Caco-2 (cell line): ENCODE measurements at regions of chr12 and their contacts with region 1.

Region 1: DNA sequence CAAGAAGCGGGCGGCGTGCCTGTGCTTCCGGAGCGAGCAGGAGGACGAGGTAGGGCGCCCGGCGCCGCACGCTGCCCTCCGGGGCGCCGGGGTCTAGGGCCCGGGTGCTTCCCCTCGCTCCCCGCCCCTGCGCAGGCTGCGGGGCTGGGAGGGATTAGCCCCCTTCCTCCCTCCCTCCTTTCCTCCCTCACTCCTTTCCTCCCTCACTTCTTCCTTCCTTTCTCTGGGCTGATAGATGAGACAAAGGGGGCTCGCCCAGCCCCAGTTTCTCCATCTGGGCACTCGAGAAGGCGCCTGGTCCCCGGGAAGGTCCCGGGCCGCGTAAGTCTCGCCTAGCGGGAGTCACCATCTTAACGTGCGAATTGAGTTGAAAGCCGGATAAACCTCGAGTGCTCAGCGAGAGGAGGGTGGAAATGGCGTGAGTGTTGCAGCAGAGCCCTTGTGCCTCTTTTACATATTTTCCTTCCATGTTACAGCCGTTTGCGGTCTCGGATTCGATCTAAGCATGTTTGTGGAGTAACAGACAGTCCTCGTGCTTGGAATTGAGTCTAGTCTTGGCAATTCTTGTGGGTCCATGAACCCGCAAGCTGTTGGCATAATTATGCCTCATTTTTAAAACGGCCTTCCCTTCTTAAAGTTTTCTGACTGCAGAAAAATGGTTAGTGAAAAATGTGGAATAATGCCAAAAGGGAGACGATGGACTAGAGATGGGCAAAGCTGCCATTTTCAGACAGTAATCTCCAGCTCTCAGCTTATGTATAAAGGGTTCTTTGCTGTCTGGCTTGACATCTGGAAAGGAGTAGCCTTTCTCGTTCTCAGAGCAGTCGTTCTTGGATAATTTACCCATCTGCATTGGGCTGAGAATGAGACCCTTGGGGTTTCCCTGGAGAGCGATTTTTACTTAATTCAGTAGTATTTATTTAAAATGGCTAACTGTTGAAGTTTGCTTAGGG is 924 bp downstream of the NUDT4 start:
- DNase-seq: peak in 1 of 2 experiments; percentile 26
- H3K4me3 ChIP-seq: peak overlapping the region; percentile 83
- H3K4me3 Mint-ChIP-seq: peak overlapping the region; percentile 80
- H3K27ac Mint-ChIP-seq: peak overlapping the region; percentile 90
- H3K4me1 ChIP-seq: peaks cover 36% of the 10 kb centered on the region
- H3K4me1 Mint-ChIP-seq: peaks cover 25% of the 10 kb centered on the region
- H3K27me3 ChIP-seq: no peaks in the 10 kb centered on the region
- H3K27me3 Mint-ChIP-seq: no peaks in the 10 kb centered on the region
- CTCF ChIP-seq: no peak

Region 2: DNA sequence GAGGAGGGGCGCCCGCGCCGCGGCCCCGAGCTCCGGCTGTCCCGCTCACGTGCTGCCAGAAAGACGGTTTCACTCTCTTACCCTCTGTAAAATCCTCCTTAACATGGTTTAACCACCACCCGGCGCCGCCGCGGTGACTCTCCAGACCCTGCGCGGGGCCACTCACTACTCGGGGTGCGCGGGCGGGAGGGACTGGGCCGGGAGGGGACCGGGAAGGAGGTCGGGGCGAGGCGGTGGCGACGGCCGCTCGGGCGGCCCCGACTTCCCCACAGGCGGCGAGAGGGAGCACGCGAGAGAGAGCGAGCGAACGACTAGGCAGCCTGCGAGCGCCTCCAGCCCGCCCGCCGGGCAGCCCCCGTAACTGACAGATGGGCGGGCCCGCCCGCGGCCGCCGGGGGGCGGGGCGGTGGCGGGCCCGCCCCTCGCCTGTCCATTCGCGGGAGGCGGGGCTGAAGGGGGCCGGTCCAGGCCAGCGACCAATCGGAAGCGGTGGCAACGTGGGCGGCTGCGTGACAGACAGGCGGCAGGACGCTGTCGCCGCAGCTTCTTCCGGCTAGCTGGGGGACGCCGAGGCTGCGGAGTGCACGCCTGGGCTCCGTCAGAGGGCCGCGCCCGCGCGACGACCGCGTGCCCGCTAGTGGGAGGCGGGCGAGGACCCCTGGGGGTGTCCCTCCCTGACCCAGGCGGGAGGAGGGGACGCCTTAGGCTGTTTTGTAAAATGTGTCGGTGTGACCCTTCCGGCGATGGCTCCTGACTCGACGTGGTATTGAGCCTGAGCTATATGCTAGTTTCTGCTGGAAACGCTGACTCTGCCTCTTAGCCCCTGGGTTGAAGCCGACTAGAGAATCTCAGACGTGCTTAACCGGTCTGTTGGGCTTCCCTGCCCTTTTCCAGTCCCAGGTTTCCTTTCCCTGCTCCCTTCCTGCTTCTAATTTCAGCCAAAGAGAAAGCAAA is 449.4 kb before region 1 on chr12 and contains the start of gene EEA1:
- CTCF ChIA-PET with region 1: no interaction called
- POLR2A ChIA-PET with region 1: no interaction called
- intact Hi-C with region 1: loop called (anchors 5 kb)
- DNase-seq: peak; percentile 97 to 98
- H3K4me3 ChIP-seq: peak within 1 kb of the TSS; percentile 88
- H3K4me3 Mint-ChIP-seq: peak within 1 kb of the TSS; percentile 90
- H3K27ac Mint-ChIP-seq: peak within 1 kb of the TSS; percentile 93
- H3K4me1 ChIP-seq: peaks cover 54% of the 10 kb centered on the region
- H3K4me1 Mint-ChIP-seq: peaks cover 50% of the 10 kb centered on the region
- H3K27me3 ChIP-seq: no peaks in the 10 kb centered on the region
- H3K27me3 Mint-ChIP-seq: no peaks in the 10 kb centered on the region
- CTCF ChIP-seq: peak in 1 of 2 experiments; percentile 12
- total RNA-seq, gene EEA1: 68.9 TPM in 2 replicates

Region 3: DNA sequence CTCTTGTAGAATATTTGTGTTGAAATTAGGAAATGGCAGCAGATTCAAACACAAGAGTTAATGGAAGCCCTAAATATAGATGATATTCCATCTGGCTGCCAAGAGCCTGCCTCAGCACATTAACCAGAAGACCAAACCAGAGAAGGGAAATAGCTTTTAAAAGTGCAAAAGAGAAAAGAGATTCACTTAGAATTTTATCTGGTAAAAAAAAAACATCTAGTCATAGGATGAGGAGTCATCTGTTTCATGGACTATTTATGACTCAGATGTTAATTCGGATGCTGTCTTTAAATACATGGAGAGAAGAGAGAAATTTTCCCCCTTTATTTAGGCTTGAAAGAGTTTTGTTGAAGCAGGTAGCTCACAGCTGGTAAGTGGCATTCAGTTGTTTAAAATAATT is 202.5 kb before region 1 on chr12:
- CTCF ChIA-PET with region 1: no interaction called
- POLR2A ChIA-PET with region 1: no interaction called
- intact Hi-C with region 1: loop called (anchors 5 kb)
- DNase-seq: no peak
- H3K4me3 ChIP-seq: no peak overlapping the region
- H3K4me3 Mint-ChIP-seq: no peak overlapping the region
- H3K27ac Mint-ChIP-seq: peak overlapping the region; percentile 87
- H3K4me1 ChIP-seq: peaks cover 24% of the 10 kb centered on the region
- H3K4me1 Mint-ChIP-seq: peaks cover 24% of the 10 kb centered on the region
- H3K27me3 ChIP-seq: no peaks in the 10 kb centered on the region
- H3K27me3 Mint-ChIP-seq: no peaks in the 10 kb centered on the region
- CTCF ChIP-seq: no peak

Region 4: DNA sequence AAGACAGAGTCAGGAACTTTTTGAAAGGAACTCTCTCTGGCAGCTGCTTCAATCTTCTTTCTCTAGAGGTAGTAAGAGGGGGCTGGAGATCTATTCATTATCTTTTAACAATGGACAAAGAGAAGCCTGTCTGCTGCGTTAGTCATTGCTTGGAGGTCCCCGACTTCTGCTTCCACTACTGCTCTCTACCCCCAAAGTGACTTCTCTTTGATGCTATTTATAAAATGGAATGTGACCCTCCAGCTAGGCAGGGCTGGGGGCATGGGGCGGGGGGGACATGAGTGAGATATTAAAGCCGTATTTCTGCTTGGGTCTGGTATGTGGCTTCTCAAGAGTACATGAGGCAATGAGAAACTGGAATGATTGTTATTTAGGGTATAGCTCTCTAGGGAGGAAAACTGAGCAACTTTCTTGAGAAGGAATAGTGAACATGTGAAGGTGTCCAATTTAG is 42.3 kb before region 1 on chr12:
- CTCF ChIA-PET with region 1: interaction called, 3 read pairs
- POLR2A ChIA-PET with region 1: no interaction called
- intact Hi-C with region 1: loop called (anchors 2 kb)
- DNase-seq: peak in 1 of 2 experiments; percentile 61
- H3K4me3 ChIP-seq: no peak overlapping the region
- H3K4me3 Mint-ChIP-seq: peak overlapping the region; percentile 42
- H3K27ac Mint-ChIP-seq: peak overlapping the region; percentile 84
- H3K4me1 ChIP-seq: peaks cover 28% of the 10 kb centered on the region
- H3K4me1 Mint-ChIP-seq: peaks cover 17% of the 10 kb centered on the region
- H3K27me3 ChIP-seq: no peaks in the 10 kb centered on the region
- H3K27me3 Mint-ChIP-seq: no peaks in the 10 kb centered on the region
- CTCF ChIP-seq: no peak

Region 5: GRCh38 chr12:93507165-93507564 is 128.5 kb after region 1 on chr12:
- CTCF ChIA-PET with region 1: no interaction called
- POLR2A ChIA-PET with region 1: no interaction called
- intact Hi-C with region 1: no loop called
- DNase-seq: no peak
- H3K4me3 ChIP-seq: no peak overlapping the region
- H3K4me3 Mint-ChIP-seq: no peak overlapping the region
- H3K27ac Mint-ChIP-seq: no peak overlapping the region
- H3K4me1 ChIP-seq: no peaks in the 10 kb centered on the region
- H3K4me1 Mint-ChIP-seq: no peaks in the 10 kb centered on the region
- H3K27me3 ChIP-seq: no peaks in the 10 kb centered on the region
- H3K27me3 Mint-ChIP-seq: no peaks in the 10 kb centered on the region
- CTCF ChIP-seq: no peak

Region 6: DNA sequence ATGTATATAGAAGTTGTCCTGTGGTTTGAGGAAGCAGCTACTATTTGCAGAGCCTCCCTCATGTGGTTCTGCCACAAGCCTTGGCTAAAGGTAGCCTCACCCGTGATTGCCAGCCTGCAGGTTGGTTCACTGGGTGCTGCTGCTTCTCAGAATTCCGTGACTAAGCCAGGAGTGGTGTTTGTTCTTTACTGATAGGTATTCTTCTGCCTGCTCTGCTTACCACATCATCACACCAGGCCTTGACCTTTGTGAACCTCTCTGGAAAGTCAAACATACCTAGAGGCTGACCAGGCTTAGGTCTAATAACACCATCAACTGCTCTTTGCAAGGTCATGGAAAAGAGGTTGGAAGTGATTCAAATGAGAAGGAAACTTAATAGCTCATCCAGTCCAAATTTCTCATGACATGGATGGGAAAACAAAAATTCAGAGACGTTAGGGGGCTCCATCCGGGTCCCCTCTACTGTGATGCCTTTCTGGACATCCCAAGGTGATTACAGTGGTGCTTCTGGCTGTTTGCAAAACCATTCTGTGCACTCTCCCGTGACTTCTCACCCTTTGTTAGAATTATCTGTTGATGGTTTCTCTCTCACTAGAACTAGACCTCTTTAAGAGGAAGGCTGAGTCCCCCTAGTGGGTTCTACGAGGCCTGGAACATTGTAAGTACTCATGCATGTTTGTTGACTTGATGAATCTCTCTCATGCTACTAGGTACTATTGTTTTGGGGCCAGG is 185.3 kb after region 1 on chr12:
- CTCF ChIA-PET with region 1: no interaction called
- POLR2A ChIA-PET with region 1: no interaction called
- intact Hi-C with region 1: no loop called
- DNase-seq: peak; percentile 82 to 85
- H3K4me3 ChIP-seq: no peak overlapping the region
- H3K4me3 Mint-ChIP-seq: peak overlapping the region; percentile 47
- H3K27ac Mint-ChIP-seq: peak overlapping the region; percentile 64
- H3K4me1 ChIP-seq: peaks cover 31% of the 10 kb centered on the region
- H3K4me1 Mint-ChIP-seq: peaks cover 33% of the 10 kb centered on the region
- H3K27me3 ChIP-seq: no peaks in the 10 kb centered on the region
- H3K27me3 Mint-ChIP-seq: no peaks in the 10 kb centered on the region
- CTCF ChIP-seq: no peak